ENCODE measurements at regions of chr3 and their contacts with region 1.

Region 1: GRCh38 chr3:187006864-187007630 is 76.7 kb downstream of the ST6GAL1 start:
- DNase-seq: peak in 3 of 5 donors; percentile 31 to 59 (median 38)
- H3K4me3 ChIP-seq: peak overlapping the region in 1 of 2 donors; percentile 12
- H3K4me3 Mint-ChIP-seq: peak overlapping the region; percentile 1 to 79 (median 58)
- H3K27ac ChIP-seq: peak overlapping the region; percentile 39
- H3K27ac Mint-ChIP-seq: peak overlapping the region; percentile 5 to 72 (median 58)
- H3K4me1 ChIP-seq: peaks cover 67% of the 10 kb centered on the region
- H3K4me1 Mint-ChIP-seq: peaks cover 52 to 70% (median 63%) of the 10 kb centered on the region in 4 donors
- H3K27me3 ChIP-seq: no peaks in the 10 kb centered on the region
- H3K27me3 Mint-ChIP-seq: no peaks in the 10 kb centered on the region

Region 2: DNA sequence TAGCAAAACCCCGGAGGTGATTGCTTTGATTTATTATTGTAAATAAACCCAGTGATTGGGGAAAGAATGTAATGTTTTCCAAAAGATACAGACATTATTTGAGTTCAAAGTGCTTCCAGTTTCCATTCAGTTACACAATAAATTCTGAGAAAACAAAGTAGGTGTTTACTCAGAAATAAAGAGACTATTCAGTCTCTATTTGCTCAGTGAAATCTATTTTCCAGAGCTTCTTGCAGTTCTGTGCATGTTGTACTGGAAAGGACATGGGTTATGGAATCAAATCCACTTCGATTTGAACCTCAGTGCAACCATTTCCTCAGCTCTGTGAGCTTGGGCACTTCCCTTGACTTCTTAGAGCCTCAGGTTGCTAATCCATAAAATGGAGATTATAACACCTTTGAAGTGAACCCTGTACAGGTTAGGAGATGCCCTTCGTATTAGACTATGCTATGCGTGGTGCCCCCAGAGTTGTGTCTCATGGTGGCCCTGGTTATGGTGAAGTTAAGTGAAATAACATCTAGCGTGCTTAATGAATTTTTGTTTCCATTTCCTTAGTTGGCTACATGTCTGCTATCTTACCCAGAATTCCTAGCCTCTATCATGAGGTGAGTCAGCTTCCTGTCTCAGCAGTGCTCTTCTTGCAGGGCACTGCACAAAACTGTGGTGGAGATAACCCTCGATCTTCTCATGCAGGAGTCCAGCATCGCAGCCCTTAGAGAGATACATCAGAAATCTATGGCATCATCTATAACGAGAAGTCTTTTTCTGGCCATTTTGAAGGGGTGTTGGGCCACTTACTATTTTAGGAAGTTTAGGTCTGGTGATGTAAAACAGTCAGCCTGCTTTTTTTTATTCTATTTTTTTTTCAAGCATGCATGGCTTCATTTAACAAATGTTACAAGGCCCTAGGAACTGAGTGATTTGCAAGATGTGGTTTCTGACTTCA is 34.6 kb after region 1 on chr3:
- CTCF ChIA-PET with region 1: interaction called, 3 read pairs
- POLR2A ChIA-PET with region 1: interaction called, 6 read pairs
- intact Hi-C with region 1: loop called (anchors 5 kb)
- DNase-seq: peak; percentile 55 to 87 (median 65)
- H3K4me3 ChIP-seq: peak overlapping the region in 1 of 2 donors; percentile 17
- H3K4me3 Mint-ChIP-seq: peak overlapping the region; percentile 60 to 82 (median 72)
- H3K27ac ChIP-seq: peak overlapping the region; percentile 59
- H3K27ac Mint-ChIP-seq: peak overlapping the region; percentile 90 to 97 (median 94)
- H3K4me1 ChIP-seq: peaks cover 87% of the 10 kb centered on the region
- H3K4me1 Mint-ChIP-seq: peaks cover 65 to 85% (median 79%) of the 10 kb centered on the region in 4 donors
- H3K27me3 ChIP-seq: no peaks in the 10 kb centered on the region
- H3K27me3 Mint-ChIP-seq: no peaks in the 10 kb centered on the region

Region 3: DNA sequence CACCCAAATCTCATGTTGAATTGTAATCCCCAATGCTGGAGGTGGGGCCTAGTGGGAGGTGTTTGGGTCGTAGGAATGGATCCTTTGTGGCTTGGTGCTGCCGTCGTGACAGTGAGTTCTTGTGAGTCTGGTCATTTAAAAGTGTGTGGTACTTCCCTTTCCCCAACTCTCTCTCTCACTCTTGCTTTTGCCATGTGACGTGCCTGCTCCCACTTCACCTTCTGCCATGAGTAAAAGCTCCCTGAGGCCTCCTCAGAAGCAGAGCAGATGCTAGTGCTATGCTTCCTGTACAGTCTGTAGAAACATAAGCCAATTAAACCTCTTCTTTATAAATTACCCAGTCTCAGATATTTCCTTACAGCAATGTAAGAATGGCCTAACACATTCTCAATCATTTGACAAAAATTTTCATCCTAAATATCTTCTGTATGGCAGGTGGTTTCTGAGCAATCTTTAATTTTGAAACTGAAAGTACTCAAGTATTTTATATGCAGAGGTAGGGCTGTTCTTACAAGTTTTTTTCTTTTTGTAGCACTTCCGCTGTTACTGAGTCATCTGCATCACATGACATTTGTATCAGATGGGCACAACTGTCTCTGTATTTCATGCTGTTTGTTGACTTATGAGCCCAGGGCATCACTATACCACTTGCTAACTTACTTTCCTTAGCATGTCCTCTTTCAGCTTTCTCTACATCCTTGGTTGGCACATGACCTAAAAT is 123.5 kb after region 1 on chr3:
- CTCF ChIA-PET with region 1: no interaction called
- POLR2A ChIA-PET with region 1: interaction called, 3 read pairs
- intact Hi-C with region 1: loop called (anchors 5 kb)
- DNase-seq: peak; percentile 74 to 86 (median 83)
- H3K4me3 ChIP-seq: peak overlapping the region in 1 of 2 donors; percentile 37
- H3K4me3 Mint-ChIP-seq: peak overlapping the region; percentile 22 to 82 (median 74)
- H3K27ac ChIP-seq: peak overlapping the region; percentile 74
- H3K27ac Mint-ChIP-seq: peak overlapping the region; percentile 93 to 99 (median 98)
- H3K4me1 ChIP-seq: peaks cover 26% of the 10 kb centered on the region
- H3K4me1 Mint-ChIP-seq: peaks cover 16 to 39% (median 27%) of the 10 kb centered on the region in 4 donors
- H3K27me3 ChIP-seq: no peaks in the 10 kb centered on the region
- H3K27me3 Mint-ChIP-seq: no peaks in the 10 kb centered on the region